ENCODE measurements at regions of chr9 and their contacts with region 1.

Region 1: DNA sequence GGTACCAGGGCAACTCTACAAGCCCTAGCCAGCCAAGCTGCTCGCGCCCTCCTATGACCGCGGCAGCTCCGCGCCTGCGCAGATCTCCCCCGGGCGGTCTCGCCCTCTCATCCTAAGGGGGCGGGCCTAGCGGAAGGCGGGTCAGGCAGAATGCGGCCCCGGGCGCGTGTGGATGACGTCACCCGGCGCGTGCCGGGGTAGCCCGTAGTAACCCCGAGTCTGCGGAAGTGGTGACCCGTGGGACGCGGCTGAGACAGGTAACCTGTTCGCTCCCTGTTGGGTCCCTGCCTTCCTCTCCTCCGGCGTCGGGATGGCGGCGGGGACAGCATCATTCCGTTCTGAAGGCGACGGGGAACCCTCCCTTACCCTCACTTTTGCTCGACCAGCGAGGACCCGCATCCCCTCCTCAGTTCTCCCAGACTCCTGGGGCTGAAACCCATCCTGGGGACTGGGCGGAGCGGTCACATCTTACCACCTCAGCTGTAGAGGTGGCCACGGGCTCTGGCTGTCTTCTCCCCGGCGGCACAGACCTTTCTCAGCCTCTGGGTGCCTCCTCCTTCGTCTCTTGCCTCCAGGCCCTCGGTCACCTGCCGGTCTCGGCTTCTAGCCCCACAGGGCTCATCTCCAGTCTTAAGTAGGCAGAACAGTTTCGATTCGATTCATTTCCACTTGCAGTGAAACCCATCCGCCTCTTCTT is at the start of gene AOPEP:
- DNase-seq: peak; percentile 97 to 99 (median 99)
- H3K4me3 ChIP-seq: peak within 1 kb of the TSS; percentile 84 to 98
- H3K4me3 Mint-ChIP-seq: peak within 1 kb of the TSS; percentile 96 to 99 (median 98)
- H3K27ac ChIP-seq: peak within 1 kb of the TSS; percentile 63
- H3K27ac Mint-ChIP-seq: peak within 1 kb of the TSS; percentile 94 to 100 (median 99)
- H3K4me1 ChIP-seq: peaks cover 13% of the 10 kb centered on the region
- H3K4me1 Mint-ChIP-seq: peaks cover 12 to 24% (median 17%) of the 10 kb centered on the region in 4 donors
- H3K27me3 ChIP-seq: no peaks in the 10 kb centered on the region
- H3K27me3 Mint-ChIP-seq: no peaks in the 10 kb centered on the region
- total RNA-seq, gene AOPEP: 11.6 to 11.7 TPM

Region 2: GRCh38 chr9:94672811-94673487 is 53.7 kb before region 1 on chr9:
- CTCF ChIA-PET with region 1: interaction called, 9 read pairs
- POLR2A ChIA-PET with region 1: interaction called, 18 read pairs
- intact Hi-C with region 1: loop called (anchors 1 kb)
- DNase-seq: no peak
- H3K4me3 ChIP-seq: no peak overlapping the region
- H3K4me3 Mint-ChIP-seq: no peak overlapping the region
- H3K27ac ChIP-seq: no peak overlapping the region
- H3K27ac Mint-ChIP-seq: no peak overlapping the region
- H3K4me1 ChIP-seq: no peaks in the 10 kb centered on the region
- H3K4me1 Mint-ChIP-seq: peaks cover 4 to 9% (median 6%) of the 10 kb centered on the region in 4 donors
- H3K27me3 ChIP-seq: no peaks in the 10 kb centered on the region
- H3K27me3 Mint-ChIP-seq: no peaks in the 10 kb centered on the region

Region 3: GRCh38 chr9:94743035-94743954 is 16.7 kb after region 1 on chr9:
- CTCF ChIA-PET with region 1: no interaction called
- POLR2A ChIA-PET with region 1: no interaction called
- intact Hi-C with region 1: no loop called
- DNase-seq: no peak
- H3K4me3 ChIP-seq: no peak overlapping the region
- H3K4me3 Mint-ChIP-seq: no peak overlapping the region
- H3K27ac ChIP-seq: no peak overlapping the region
- H3K27ac Mint-ChIP-seq: no peak overlapping the region
- H3K4me1 ChIP-seq: no peaks in the 10 kb centered on the region
- H3K4me1 Mint-ChIP-seq: peaks cover 0 to 5% (median under 1%) of the 10 kb centered on the region in 4 donors
- H3K27me3 ChIP-seq: no peaks in the 10 kb centered on the region
- H3K27me3 Mint-ChIP-seq: no peaks in the 10 kb centered on the region

Region 4: DNA sequence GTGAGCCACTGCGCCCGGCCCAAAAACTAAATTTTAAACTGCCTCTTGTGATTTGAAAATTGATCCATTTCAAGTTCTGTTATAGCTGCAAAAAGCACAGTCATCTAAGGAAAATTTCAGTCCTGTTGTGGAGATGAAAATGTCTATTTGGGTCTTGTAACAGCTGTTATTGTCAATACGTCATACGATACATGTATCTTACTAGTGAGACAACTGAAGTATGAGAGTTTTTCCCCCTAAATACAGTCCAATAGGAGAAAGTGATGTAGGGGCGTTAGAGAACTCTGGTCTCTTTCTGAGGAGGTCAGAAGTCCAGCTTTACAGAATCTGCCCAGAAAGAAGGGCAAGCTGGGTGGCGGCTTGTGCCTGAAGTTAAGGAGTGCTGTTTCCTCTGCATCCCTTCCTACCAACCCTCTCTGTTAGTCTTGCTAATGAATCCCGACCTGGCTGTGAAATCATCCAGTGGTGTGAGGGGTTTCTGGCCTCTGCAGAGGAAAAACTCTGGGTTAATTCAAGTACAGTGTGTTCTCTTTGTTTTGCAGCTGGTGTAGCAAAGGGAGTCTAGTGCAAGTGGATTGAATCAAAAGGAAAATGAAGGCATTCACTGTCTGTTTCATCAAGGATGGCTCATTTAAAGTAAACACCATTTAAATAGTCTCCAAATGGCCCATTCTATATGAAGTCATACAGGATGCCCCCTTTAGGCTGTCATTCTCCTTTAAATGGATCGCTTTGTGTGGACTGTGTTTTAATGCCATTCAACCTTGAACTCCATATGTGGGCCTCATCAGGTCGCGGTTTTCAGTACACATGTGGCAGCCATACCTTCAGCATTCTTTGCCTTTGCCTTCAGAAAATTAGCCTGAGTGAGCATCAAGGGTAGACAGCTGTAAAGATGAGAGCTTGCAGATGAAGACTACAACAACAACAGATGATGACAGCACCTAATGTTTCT is 58.8 kb after region 1 on chr9:
- CTCF ChIA-PET with region 1: no interaction called
- POLR2A ChIA-PET with region 1: no interaction called
- intact Hi-C with region 1: no loop called
- DNase-seq: no peak
- H3K4me3 ChIP-seq: no peak overlapping the region
- H3K4me3 Mint-ChIP-seq: no peak overlapping the region
- H3K27ac ChIP-seq: no peak overlapping the region
- H3K27ac Mint-ChIP-seq: no peak overlapping the region
- H3K4me1 ChIP-seq: peaks cover 4% of the 10 kb centered on the region
- H3K4me1 Mint-ChIP-seq: peaks cover 3 to 13% (median 8%) of the 10 kb centered on the region in 4 donors
- H3K27me3 ChIP-seq: no peaks in the 10 kb centered on the region
- H3K27me3 Mint-ChIP-seq: no peaks in the 10 kb centered on the region

Region 5: GRCh38 chr9:94860968-94861871 is 134.6 kb after region 1 on chr9:
- CTCF ChIA-PET with region 1: no interaction called
- POLR2A ChIA-PET with region 1: interaction called, 5 read pairs
- intact Hi-C with region 1: loop called (anchors 2 kb)
- DNase-seq: peak; percentile 78 to 87 (median 84)
- H3K4me3 ChIP-seq: peak overlapping the region in 1 of 2 donors; percentile 22
- H3K4me3 Mint-ChIP-seq: peak overlapping the region; percentile 32 to 90 (median 80)
- H3K27ac ChIP-seq: peak overlapping the region; percentile 18
- H3K27ac Mint-ChIP-seq: peak overlapping the region; percentile 82 to 98 (median 94)
- H3K4me1 ChIP-seq: peaks cover 35% of the 10 kb centered on the region
- H3K4me1 Mint-ChIP-seq: peaks cover 34 to 53% (median 43%) of the 10 kb centered on the region in 4 donors
- H3K27me3 ChIP-seq: no peaks in the 10 kb centered on the region
- H3K27me3 Mint-ChIP-seq: no peaks in the 10 kb centered on the region

Region 6: DNA sequence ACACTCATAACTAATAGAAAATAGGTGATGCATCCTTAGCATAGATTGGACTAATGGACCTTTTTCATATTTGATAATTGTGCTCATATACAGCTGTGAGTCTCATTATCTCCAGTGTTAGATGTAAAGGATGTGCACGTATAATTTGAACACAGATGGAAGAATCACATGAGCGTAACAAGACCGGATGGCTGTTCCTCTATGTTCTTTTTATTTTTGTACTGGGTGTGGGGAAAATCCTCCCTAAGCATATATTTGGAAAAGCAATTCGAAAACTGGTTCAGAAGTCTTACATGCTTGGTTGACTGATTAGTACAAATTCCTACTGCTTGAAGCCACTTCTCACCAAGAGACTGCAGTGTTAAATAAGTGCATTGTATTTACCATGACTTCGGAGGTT is 230.1 kb after region 1 on chr9:
- CTCF ChIA-PET with region 1: no interaction called
- POLR2A ChIA-PET with region 1: no interaction called
- intact Hi-C with region 1: loop called (anchors 5 kb)
- DNase-seq: no peak
- H3K4me3 ChIP-seq: no peak overlapping the region
- H3K4me3 Mint-ChIP-seq: no peak overlapping the region
- H3K27ac ChIP-seq: no peak overlapping the region
- H3K27ac Mint-ChIP-seq: no peak overlapping the region
- H3K4me1 ChIP-seq: peaks cover 14% of the 10 kb centered on the region
- H3K4me1 Mint-ChIP-seq: peaks cover 9 to 19% (median 14%) of the 10 kb centered on the region in 4 donors
- H3K27me3 ChIP-seq: no peaks in the 10 kb centered on the region
- H3K27me3 Mint-ChIP-seq: no peaks in the 10 kb centered on the region

Region 7: DNA sequence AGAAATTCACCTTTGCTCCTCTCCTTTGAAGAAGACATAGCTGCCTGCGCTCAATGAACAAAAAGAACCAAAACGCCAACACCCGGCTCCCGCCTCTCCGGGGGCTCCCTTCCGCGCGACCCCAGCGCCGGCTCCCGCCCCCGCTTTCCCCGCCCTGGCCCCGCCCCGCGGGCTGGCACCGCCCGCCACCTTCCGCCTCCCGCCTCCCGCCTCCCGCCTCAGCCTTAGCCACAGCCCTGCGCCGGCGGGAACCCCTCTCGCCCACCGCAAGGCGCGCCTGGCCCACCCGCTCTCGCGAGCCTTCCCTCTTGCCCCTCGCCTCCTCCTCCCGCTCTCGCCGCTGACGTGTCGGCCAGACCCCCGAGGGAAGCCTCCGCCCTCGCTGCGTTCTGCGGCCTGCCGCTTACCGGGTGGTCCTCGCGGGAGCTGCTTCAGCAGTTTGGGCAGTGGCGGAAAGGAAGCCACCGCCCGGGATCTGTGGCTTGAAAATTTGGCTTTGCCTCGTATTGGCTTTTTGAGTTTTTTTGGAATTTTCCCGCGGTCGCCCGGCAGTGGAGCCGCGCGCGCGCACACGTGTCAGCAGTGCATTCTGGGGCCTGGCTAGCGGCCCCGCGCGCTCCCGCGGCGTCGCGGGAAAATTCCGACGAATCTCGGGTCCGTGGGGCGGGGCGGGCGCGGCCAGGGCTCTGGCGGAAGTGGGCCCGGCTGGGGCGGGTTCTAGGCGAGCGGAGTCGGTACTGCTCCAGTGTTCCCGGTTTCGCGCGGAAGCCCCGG is 590.7 kb after region 1 on chr9 and contains the start of gene FANCC:
- CTCF ChIA-PET with region 1: no interaction called
- POLR2A ChIA-PET with region 1: no interaction called
- intact Hi-C with region 1: loop called (anchors 2 kb)
- DNase-seq: peak; percentile 77 to 82 (median 80)
- H3K4me3 ChIP-seq: peak within 1 kb of the TSS; percentile 55 to 76
- H3K4me3 Mint-ChIP-seq: peak within 1 kb of the TSS; percentile 91 to 98 (median 93)
- H3K27ac ChIP-seq: peak within 1 kb of the TSS; percentile 67
- H3K27ac Mint-ChIP-seq: peak within 1 kb of the TSS; percentile 87 to 95 (median 89)
- H3K4me1 ChIP-seq: peaks cover 15% of the 10 kb centered on the region
- H3K4me1 Mint-ChIP-seq: peaks cover 7 to 21% (median 14%) of the 10 kb centered on the region in 4 donors
- H3K27me3 ChIP-seq: no peaks in the 10 kb centered on the region
- H3K27me3 Mint-ChIP-seq: peaks cover 0 to 3% of the 10 kb centered on the region in 2 donors
- total RNA-seq, gene FANCC: 4.4 to 4.9 TPM